Activated CD4-positive, alpha-beta T cell treated with anti-CD3 and anti-CD28 coated beads for 36 hours (primary cell): ENCODE measurements at regions of chr4 and their contacts with region 1.

Region 1: DNA sequence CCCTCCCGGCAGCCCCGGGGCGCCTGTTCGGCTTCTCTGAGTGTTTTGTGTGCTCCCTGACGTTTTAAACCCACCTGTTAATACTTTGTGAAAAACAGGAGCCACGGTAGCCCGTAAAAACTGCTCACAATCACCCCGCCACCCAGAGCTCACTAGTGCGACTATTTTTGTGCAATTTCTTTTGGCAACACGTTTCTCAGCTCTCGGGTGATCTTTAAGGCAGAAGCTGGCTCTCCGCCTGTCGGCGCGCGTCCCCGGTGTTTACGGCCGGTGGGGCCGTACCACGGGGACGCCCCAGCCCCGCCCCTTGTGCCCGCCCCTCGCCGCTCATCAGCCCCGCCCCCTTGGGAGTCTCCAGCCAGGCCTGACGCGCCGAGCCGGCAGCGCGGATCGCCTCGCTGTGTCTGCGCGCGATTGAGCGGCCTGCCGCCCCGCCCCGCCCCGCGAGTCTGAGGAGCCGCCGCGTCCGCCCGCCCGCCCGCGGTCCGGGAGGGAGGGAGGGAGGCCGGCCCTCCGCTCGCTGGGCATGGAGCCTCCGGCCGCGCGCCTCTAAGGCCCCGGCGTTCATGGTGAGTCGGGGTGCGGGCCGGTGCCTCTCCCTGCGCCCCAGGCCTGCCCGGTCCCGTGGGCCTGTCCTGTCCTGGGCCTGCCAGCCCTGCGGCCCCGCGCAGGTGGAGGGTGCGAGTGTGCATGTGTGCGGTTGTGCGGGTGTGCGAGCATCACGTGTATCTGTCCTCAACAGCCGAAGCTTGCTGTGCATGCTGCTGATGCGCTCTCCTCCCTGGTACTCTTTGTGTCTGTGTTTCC is 56.2 kb upstream of the TADA2B start:
- DNase-seq: peak; percentile 97
- ATAC-seq: peak; percentile 93
- H3K4me3 Mint-ChIP-seq: peak overlapping the region; percentile 96
- H3K27ac Mint-ChIP-seq: peak overlapping the region; percentile 93
- H3K4me1 Mint-ChIP-seq: peaks cover 66% of the 10 kb centered on the region
- H3K27me3 Mint-ChIP-seq: no peaks in the 10 kb centered on the region

Region 2: DNA sequence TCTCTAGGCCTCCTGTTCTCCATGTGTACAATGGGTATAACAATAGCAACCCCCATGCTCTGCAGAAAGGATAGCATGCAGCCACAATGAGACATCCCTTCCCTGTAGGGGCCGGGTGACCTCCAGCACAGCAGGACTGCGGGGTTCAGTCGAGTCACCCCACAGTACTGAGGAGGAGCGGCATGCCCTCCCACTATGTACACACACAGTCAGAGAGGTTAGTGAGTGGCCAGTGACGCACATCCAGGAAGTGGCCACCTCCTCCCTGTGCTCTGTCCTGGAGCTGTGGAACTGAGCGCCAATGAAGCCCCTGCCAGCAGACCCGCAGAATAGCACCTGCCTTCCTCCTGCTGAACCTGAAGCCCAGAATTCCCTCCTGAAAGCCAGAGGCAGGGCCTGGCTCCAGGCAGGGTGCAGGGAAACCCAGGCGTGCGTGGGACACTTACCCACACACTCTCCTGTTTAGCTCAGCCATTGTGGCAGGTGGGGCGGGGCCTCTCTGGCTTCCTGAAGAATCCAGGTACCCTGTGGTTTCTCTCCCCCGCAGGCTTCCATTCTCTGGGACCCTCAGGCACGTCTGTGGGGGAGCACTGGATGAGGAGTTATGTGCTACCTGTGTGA is 667.3 kb before region 1 on chr4:
- CTCF ChIA-PET with region 1: no interaction called
- POLR2A ChIA-PET with region 1: no interaction called
- intact Hi-C with region 1: no loop called
- DNase-seq: no peak
- ATAC-seq: no peak
- H3K4me3 Mint-ChIP-seq: no peak overlapping the region
- H3K27ac Mint-ChIP-seq: no peak overlapping the region
- H3K4me1 Mint-ChIP-seq: no peaks in the 10 kb centered on the region
- H3K27me3 Mint-ChIP-seq: peaks cover 25% of the 10 kb centered on the region

Region 3: GRCh38 chr4:6640292-6641163 is 346.5 kb before region 1 on chr4 and contains the start of gene MRFAP1:
- CTCF ChIA-PET with region 1: interaction called, 3 read pairs
- POLR2A ChIA-PET with region 1: no interaction called
- intact Hi-C with region 1: loop called in 1 of 2 experiments (anchors 2 kb)
- DNase-seq: peak; percentile 97
- ATAC-seq: peak; percentile 86
- H3K4me3 Mint-ChIP-seq: peak within 1 kb of the TSS; percentile 96
- H3K27ac Mint-ChIP-seq: peak within 1 kb of the TSS; percentile 100
- H3K4me1 Mint-ChIP-seq: peaks cover 27% of the 10 kb centered on the region
- H3K27me3 Mint-ChIP-seq: no peaks in the 10 kb centered on the region
- total RNA-seq, gene MRFAP1: 66.8 to 122 TPM

Region 4: DNA sequence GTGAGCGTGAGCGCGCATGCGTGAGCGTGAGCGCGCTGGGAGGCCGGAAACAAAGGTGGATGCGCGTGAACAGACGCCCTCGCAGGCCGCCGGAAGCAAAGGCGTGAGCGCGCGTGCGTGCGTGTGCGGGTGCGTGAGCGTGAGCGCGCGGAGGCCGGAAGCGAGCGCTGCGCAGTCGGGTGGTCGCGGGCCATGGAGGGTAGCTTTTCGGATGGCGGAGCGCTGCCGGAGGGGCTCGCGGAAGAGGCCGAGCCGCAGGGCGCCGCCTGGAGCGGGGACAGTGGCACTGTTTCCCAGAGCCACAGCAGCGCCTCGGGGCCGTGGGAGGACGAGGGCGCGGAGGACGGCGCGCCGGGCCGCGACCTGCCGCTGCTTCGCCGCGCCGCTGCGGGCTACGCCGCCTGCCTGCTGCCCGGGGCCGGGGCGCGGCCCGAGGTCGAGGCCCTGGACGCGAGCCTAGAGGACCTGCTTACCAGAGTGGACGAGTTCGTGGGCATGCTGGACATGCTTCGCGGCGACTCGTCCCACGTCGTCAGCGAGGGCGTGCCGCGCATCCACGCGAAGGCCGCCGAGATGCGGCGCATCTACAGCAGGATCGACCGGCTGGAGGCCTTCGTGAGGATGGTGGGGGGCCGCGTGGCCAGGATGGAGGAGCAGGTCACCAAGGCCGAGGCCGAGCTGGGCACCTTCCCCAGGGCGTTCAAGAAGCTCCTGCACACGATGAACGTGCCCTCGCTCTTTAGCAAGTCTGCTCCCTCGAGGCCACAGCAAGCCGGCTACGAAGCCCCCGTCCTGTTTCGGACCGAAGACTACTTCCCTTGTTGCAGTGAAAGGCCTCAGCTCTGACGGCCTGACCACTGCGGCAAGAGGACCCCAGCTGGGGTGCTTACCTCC is 270.7 kb before region 1 on chr4 and contains the start of gene BLOC1S4:
- CTCF ChIA-PET with region 1: interaction called, 3 read pairs
- POLR2A ChIA-PET with region 1: no interaction called
- intact Hi-C with region 1: loop called (anchors 1 to 10 kb)
- DNase-seq: peak; percentile 93
- ATAC-seq: peak; percentile 80
- H3K4me3 Mint-ChIP-seq: peak within 1 kb of the TSS; percentile 92
- H3K27ac Mint-ChIP-seq: peak within 1 kb of the TSS; percentile 92
- H3K4me1 Mint-ChIP-seq: peaks cover 27% of the 10 kb centered on the region
- H3K27me3 Mint-ChIP-seq: no peaks in the 10 kb centered on the region
- total RNA-seq, gene BLOC1S4: 10.1 to 16.7 TPM

Region 5: GRCh38 chr4:7042697-7043464 is 55.9 kb after region 1 on chr4 and contains the start of gene TADA2B:
- CTCF ChIA-PET with region 1: interaction called, 7 read pairs
- POLR2A ChIA-PET with region 1: interaction called, 3 read pairs
- intact Hi-C with region 1: loop called (anchors 1 to 2 kb)
- DNase-seq: peak; percentile 95
- ATAC-seq: peak; percentile 87
- H3K4me3 Mint-ChIP-seq: peak within 1 kb of the TSS; percentile 86
- H3K27ac Mint-ChIP-seq: peak within 1 kb of the TSS; percentile 77
- H3K4me1 Mint-ChIP-seq: peaks cover 46% of the 10 kb centered on the region
- H3K27me3 Mint-ChIP-seq: peaks cover 3% of the 10 kb centered on the region
- total RNA-seq, gene TADA2B: 9.0 to 10.6 TPM